Activated CD8-positive, alpha-beta memory T cell treated with anti-CD3 and anti-CD28 coated beads, Interleukin-2, amount 10 ng/mL, durations not matched to agents 7 days and 5 days (primary cell): ENCODE measurements at regions of chr11 and their contacts with region 1.

Region 1: GRCh38 chr11:66842896-66843775 is at the start of gene RCE1:
- DNase-seq: peak; percentile 92
- ATAC-seq: peak; percentile 91
- H3K4me3 Mint-ChIP-seq: peak within 1 kb of the TSS; percentile 92
- H3K27ac Mint-ChIP-seq: peak within 1 kb of the TSS; percentile 95
- H3K4me1 Mint-ChIP-seq: peaks cover 45% of the 10 kb centered on the region
- H3K27me3 Mint-ChIP-seq: no peaks in the 10 kb centered on the region
- total RNA-seq, gene RCE1: 24.1 to 25.7 TPM

Region 2: DNA sequence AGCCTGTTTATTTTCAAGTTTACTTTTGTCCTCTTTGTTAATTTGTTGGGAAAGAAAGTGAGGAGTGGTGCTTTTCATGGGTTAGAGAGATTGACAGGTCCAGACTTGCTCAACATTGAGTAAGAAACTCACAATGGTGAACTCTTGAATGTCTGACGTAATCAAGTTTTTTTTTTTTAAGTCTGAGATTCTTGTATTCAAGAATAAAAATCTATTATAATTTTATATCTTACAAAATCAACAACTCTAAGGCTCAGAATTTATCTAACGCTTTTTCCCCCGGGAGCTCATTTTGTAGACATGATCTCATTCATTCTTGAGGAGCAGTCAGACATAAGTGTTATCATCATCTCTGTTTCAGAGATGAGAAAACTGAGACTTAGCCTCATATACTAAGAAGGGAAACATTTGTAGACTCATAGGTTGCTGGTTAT is 75.0 kb before region 1 on chr11:
- CTCF ChIA-PET with region 1: no interaction called
- DNase-seq: no peak
- ATAC-seq: no peak
- H3K4me3 Mint-ChIP-seq: no peak overlapping the region
- H3K27ac Mint-ChIP-seq: no peak overlapping the region
- H3K4me1 Mint-ChIP-seq: no peaks in the 10 kb centered on the region
- H3K27me3 Mint-ChIP-seq: no peaks in the 10 kb centered on the region

Region 3: GRCh38 chr11:66883016-66883968 is 40.2 kb after region 1 on chr11:
- CTCF ChIA-PET with region 1: interaction called, 14 read pairs
- DNase-seq: peak; percentile 74
- ATAC-seq: peak; percentile 73
- H3K4me3 Mint-ChIP-seq: no peak overlapping the region
- H3K27ac Mint-ChIP-seq: no peak overlapping the region
- H3K4me1 Mint-ChIP-seq: peaks cover 14% of the 10 kb centered on the region
- H3K27me3 Mint-ChIP-seq: no peaks in the 10 kb centered on the region

Region 4: GRCh38 chr11:67146516-67147226 is 303.5 kb after region 1 on chr11:
- CTCF ChIA-PET with region 1: no interaction called
- DNase-seq: no peak
- ATAC-seq: no peak
- H3K4me3 Mint-ChIP-seq: no peak overlapping the region
- H3K27ac Mint-ChIP-seq: no peak overlapping the region
- H3K4me1 Mint-ChIP-seq: peaks cover 2% of the 10 kb centered on the region
- H3K27me3 Mint-ChIP-seq: no peaks in the 10 kb centered on the region